ENCODE measurements at regions of chr22 and their contacts with region 1.

Region 1: DNA sequence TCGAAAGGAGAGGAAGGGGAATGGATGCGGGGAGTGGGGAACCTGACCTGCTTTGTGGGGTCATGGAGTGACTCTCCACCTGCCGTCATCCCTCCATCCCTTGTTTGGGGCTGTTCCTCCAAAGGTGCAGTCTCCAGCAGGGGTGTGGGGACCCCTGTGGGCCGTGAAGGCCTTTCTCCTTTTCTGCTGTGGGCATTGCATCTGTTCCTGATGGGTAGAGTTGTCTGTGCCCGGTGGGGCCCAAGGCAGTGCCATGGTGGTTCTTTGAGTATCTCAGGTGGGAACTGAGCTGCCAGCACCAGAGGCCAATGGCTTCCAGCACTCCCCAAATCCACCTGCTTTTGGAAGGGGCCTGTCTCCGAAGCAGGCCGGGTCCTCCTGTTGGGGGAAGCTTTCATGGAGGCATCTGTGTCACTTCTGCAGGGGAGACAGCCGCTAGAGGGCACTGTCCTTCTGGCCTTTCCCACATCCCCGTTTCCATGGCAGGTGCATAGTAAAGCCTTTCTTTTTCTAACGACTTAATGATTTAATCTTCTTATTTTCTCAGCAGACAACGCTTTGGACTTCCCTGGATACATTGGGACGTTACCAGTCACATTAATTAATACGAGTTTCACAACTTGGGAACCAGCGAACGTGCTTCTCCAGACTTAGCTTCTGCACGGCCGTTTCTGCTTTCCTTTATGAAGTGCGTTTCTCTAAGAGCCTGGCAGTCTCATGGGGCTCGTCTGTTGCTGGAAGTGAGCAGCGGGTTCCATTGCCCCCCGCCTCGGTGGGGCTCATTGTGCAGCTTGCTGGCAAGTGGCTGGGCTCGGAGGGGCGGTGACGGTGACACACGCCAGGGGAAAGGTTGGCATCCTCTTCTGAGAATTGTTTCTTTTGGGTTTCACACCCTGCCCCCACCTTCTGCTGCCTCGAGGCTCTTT is 57.1 kb downstream of the PARVB start:
- DNase-seq: peak; percentile 80
- ATAC-seq: peak; percentile 61
- H3K4me3 ChIP-seq: no peak overlapping the region
- H3K4me3 Mint-ChIP-seq: no peak overlapping the region
- H3K27ac ChIP-seq: no peak overlapping the region
- H3K27ac Mint-ChIP-seq: no peak overlapping the region
- H3K4me1 ChIP-seq: peaks cover 0 to 9% of the 10 kb centered on the region in 2 donors
- H3K4me1 Mint-ChIP-seq: peaks cover 2% of the 10 kb centered on the region
- H3K27me3 ChIP-seq: no peaks in the 10 kb centered on the region
- H3K27me3 Mint-ChIP-seq: no peaks in the 10 kb centered on the region
- CTCF ChIP-seq: peak; percentile 90

Region 2: DNA sequence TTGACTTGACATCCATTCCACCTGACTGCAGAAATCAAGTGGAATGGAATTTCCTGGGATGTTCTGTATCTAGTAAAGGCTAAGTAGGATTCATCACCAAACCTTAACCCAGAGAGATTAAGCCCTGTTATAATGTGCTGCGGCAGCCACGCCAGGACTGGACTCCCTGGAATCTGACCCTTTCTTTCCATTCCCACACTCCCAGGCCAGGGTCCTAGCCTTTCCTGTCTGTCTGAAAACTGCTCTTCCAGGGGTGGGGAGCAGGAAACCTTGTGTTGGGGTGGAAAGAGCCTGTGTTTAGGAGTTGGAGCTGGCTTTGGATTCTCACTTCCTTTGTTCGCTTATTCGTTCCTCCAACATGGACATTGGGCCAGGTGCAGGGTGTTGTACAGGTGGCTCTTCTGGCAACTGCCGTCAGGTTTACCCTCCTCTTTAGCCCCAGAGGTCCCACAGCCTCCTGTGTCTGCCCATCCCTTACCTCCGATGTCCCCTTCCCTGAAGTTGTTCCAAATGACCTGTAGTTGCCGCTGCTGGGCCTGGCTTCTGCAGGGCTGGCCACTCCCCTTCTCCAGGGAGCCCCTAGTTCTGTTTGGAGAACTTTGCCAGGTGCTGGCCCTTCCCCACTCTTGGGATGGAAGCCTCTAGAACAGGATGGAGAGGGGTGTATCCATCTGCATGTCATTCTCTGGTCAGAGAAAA is 77.6 kb before region 1 on chr22:
- CTCF ChIA-PET with region 1: interaction called, 691 read pairs
- POLR2A ChIA-PET with region 1: interaction called, 6 read pairs
- intact Hi-C with region 1: no loop called
- DNase-seq: no peak
- ATAC-seq: no peak
- H3K4me3 ChIP-seq: no peak overlapping the region
- H3K4me3 Mint-ChIP-seq: no peak overlapping the region
- H3K27ac ChIP-seq: no peak overlapping the region
- H3K27ac Mint-ChIP-seq: no peak overlapping the region
- H3K4me1 ChIP-seq: peaks cover 10 to 19% of the 10 kb centered on the region in 2 donors
- H3K4me1 Mint-ChIP-seq: peaks cover 22% of the 10 kb centered on the region
- H3K27me3 ChIP-seq: no peaks in the 10 kb centered on the region
- H3K27me3 Mint-ChIP-seq: no peaks in the 10 kb centered on the region
- CTCF ChIP-seq: no peak

Region 3: DNA sequence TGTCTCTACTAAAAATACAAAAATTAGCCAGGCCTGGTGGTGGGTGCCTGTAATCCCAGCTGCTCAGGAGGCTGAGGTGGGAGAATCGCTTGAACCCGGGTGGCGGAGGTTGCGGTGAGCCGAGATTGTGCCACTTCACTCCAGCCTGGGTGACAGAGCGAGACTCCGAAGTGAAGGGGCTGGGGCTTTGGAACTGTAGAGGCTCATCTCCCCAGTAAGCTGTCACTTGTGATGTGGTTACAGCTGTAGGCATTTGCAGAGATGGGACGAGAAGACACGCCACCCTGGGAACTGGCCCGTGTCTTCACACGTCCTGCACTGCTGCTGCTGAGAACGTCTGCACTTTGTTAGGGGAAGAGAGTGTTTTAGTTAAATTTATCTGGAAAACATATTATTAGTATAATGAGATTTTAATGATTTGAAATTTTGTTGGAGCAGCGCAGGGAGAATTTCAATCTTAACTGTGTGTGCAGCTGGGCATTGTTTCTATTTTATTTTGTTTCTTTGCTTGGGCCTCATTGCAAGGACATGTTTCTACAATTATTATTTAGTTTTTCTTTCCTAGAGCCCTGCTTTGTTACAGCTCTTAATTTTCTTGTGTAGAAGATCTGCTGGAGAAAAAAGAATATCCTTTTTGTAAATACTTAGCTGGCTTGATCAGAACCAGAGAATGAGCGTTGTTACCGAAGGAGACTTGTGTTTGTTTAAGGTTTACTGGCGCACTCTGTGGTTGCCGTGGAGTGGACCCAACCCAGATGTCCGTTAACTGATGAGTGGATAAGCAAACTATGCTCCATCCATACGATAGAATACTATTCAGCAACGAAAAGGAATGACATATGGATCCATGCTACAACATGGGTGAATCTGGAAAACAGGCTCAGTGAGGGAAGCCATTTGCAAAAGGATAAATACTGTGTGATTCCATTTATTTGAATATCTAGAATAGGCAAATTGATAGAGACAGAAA is 38.7 kb before region 1 on chr22:
- CTCF ChIA-PET with region 1: interaction called, 12 read pairs
- POLR2A ChIA-PET with region 1: no interaction called
- intact Hi-C with region 1: no loop called
- DNase-seq: peak; percentile 76
- ATAC-seq: peak; percentile 92
- H3K4me3 ChIP-seq: no peak overlapping the region
- H3K4me3 Mint-ChIP-seq: peak overlapping the region; percentile 14
- H3K27ac ChIP-seq: peak overlapping the region; percentile 6 to 39
- H3K27ac Mint-ChIP-seq: peak overlapping the region; percentile 78
- H3K4me1 ChIP-seq: peaks cover 21 to 25% of the 10 kb centered on the region in 2 donors
- H3K4me1 Mint-ChIP-seq: peaks cover 57% of the 10 kb centered on the region
- H3K27me3 ChIP-seq: no peaks in the 10 kb centered on the region
- H3K27me3 Mint-ChIP-seq: no peaks in the 10 kb centered on the region
- CTCF ChIP-seq: no peak

Region 4: GRCh38 chr22:44192098-44192810 is 111.1 kb after region 1 on chr22:
- CTCF ChIA-PET with region 1: no interaction called
- POLR2A ChIA-PET with region 1: no interaction called
- intact Hi-C with region 1: no loop called
- DNase-seq: peak; percentile 50
- ATAC-seq: no peak
- H3K4me3 ChIP-seq: no peak overlapping the region
- H3K4me3 Mint-ChIP-seq: no peak overlapping the region
- H3K27ac ChIP-seq: no peak overlapping the region
- H3K27ac Mint-ChIP-seq: no peak overlapping the region
- H3K4me1 ChIP-seq: peaks cover 33 to 57% of the 10 kb centered on the region in 2 donors
- H3K4me1 Mint-ChIP-seq: peaks cover 64% of the 10 kb centered on the region
- H3K27me3 ChIP-seq: no peaks in the 10 kb centered on the region
- H3K27me3 Mint-ChIP-seq: no peaks in the 10 kb centered on the region
- CTCF ChIP-seq: no peak

Region 5: DNA sequence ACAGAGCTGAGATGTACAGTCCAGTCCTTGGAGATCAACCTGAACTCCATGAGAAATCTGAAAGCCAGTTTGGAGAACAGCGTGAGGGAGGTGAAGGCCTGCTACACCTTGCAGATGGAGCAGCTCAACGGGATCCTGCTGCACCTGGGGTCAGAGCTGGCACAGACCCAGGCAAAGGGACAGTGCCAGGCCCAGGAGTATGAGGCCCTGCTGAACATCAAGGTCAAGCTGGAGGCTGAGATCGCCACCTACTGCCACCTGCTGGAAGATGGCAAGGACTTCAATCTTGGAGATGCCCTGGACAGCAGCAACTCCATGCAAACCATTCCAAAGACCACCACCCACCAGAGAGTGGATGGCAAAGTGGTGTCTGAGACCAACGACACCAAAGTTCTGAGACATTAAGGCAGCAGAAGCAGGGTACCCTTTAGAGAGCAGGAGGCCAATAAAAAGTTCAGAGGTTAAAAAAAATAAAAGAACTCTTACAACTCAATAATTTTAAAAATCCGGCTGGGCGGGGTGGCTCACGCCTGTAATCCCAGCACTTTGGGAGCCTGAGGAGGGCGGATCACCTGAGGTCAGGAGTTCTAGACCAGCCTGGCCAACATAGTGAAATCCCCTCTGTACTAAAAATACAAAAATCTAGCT is 486.8 kb after region 1 on chr22:
- CTCF ChIA-PET with region 1: interaction called, 11 read pairs
- POLR2A ChIA-PET with region 1: no interaction called
- intact Hi-C with region 1: no loop called
- DNase-seq: peak; percentile 34
- ATAC-seq: no peak
- H3K4me3 ChIP-seq: no peak overlapping the region
- H3K4me3 Mint-ChIP-seq: no peak overlapping the region
- H3K27ac ChIP-seq: no peak overlapping the region
- H3K27ac Mint-ChIP-seq: no peak overlapping the region
- H3K4me1 ChIP-seq: no peaks in the 10 kb centered on the region
- H3K4me1 Mint-ChIP-seq: no peaks in the 10 kb centered on the region
- H3K27me3 ChIP-seq: no peaks in the 10 kb centered on the region
- H3K27me3 Mint-ChIP-seq: peaks cover 19% of the 10 kb centered on the region
- CTCF ChIP-seq: peak; percentile 46